ENCODE measurements at regions of chr14 and their contacts with region 1.

Region 1: GRCh38 chr14:61178226-61179060 is 102.7 kb downstream of the TMEM30B start:
- DNase-seq: peak; percentile 99
- ATAC-seq: peak; percentile 83
- H3K4me3 ChIP-seq: no peak overlapping the region
- H3K27ac ChIP-seq: peak overlapping the region; percentile 100
- H3K4me1 ChIP-seq: peaks cover 33% of the 10 kb centered on the region
- H3K27me3 ChIP-seq: no peaks in the 10 kb centered on the region
- CTCF ChIP-seq: no peak
- POLR2A ChIP-seq: no peak
- RAD21 ChIP-seq: no peak; the same call in 1 of the 2 replicates

Region 2: DNA sequence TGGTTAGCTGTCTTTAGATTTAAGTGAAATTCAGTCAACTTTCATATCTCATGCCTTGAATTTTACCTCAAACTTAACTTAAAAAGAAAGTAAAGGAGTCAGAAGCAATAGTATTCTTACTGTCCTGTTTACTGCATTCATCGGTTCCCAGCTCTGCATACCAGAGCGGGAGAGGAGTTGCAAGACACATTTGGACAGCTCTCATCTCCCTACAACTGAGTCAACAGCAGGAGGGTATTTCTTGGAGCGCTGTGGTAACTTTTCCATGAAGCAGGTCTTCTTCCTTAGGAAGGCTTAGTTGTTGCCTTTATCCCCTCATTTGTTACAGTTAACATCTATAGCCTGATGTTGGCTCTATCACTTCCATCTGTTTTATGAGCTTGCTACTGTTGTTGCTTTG is 262.7 kb before region 1 on chr14:
- CTCF ChIA-PET with region 1: no interaction called
- POLR2A ChIA-PET with region 1: no interaction called
- dilution Hi-C with region 1: no loop called
- in situ Hi-C with region 1: no loop called
- intact Hi-C with region 1: no loop called
- DNase-seq: peak; percentile 5
- ATAC-seq: peak; percentile 49; the same call in 1 of the 2 replicates
- H3K4me3 ChIP-seq: no peak overlapping the region
- H3K27ac ChIP-seq: no peak overlapping the region
- H3K4me1 ChIP-seq: no peaks in the 10 kb centered on the region
- H3K27me3 ChIP-seq: no peaks in the 10 kb centered on the region
- CTCF ChIP-seq: no peak
- POLR2A ChIP-seq: no peak
- RAD21 ChIP-seq: no peak

Region 3: DNA sequence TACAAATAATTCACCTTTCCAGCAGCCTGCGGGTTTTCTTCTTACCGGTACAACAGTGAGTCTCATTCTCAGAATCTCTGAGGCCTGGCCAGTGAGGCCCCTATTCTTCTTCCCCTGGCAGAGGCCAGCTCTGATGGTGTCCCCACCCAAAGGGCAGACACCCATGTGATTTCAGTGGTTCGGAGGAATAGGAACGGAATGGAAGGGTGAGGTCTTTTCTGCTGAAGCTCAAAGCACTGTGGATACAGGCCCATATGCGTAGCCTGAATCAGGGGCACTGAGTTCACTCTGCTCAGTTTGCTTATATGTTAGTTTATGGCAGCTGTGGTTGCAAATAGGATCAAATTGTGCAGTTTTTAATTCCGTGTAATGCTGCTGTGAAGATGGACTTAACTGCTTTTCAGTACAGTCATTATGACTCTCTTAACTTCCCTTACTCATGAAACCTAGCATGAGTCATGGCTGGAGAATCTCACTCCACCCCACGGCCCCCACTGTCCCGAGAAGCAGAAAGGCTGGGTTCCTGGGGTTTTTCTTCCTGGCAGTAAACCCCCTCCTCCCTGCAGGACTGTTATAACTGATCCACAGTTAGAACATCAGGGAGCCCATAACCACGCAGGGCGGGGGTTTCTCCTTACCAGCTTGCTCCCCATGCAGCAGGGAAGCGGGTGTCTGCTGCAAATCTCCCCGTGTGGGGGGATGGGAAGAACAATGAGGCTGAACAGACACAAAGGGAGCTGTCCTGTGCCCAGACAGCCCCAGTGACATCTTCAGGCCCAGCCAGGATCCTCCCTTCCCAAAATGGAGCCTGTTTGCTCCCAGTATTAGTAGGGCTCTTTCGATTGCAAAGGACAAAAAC is 74.7 kb before region 1 on chr14:
- CTCF ChIA-PET with region 1: no interaction called
- POLR2A ChIA-PET with region 1: no interaction called
- dilution Hi-C with region 1: no loop called
- in situ Hi-C with region 1: no loop called
- intact Hi-C with region 1: loop called (anchors 2 kb)
- DNase-seq: peak; percentile 99
- ATAC-seq: peak; percentile 88
- H3K4me3 ChIP-seq: no peak overlapping the region
- H3K27ac ChIP-seq: peak overlapping the region; percentile 95
- H3K4me1 ChIP-seq: peaks cover 42% of the 10 kb centered on the region
- H3K27me3 ChIP-seq: no peaks in the 10 kb centered on the region
- CTCF ChIP-seq: no peak
- POLR2A ChIP-seq: no peak
- RAD21 ChIP-seq: no peak

Measured in IMR-90 (cell line).